Dendritic cell treated with granulocyte-macrophage colony-stimulating factor and Interleukin-4, amounts not matched to agents 40 ng/mL and 50 ng/mL, for 4 days (primary cell): ENCODE measurements at regions of chr16 and their contacts with region 1.

Region 1: GRCh38 chr16:57802341-57803133 is at the start of gene KIFC3:
- H3K4me3 Mint-ChIP-seq: peak within 1 kb of the TSS; percentile 83
- H3K27ac Mint-ChIP-seq: peak within 1 kb of the TSS; percentile 76
- H3K4me1 Mint-ChIP-seq: peaks cover 66% of the 10 kb centered on the region
- H3K27me3 Mint-ChIP-seq: peaks cover 5% of the 10 kb centered on the region

Region 2: DNA sequence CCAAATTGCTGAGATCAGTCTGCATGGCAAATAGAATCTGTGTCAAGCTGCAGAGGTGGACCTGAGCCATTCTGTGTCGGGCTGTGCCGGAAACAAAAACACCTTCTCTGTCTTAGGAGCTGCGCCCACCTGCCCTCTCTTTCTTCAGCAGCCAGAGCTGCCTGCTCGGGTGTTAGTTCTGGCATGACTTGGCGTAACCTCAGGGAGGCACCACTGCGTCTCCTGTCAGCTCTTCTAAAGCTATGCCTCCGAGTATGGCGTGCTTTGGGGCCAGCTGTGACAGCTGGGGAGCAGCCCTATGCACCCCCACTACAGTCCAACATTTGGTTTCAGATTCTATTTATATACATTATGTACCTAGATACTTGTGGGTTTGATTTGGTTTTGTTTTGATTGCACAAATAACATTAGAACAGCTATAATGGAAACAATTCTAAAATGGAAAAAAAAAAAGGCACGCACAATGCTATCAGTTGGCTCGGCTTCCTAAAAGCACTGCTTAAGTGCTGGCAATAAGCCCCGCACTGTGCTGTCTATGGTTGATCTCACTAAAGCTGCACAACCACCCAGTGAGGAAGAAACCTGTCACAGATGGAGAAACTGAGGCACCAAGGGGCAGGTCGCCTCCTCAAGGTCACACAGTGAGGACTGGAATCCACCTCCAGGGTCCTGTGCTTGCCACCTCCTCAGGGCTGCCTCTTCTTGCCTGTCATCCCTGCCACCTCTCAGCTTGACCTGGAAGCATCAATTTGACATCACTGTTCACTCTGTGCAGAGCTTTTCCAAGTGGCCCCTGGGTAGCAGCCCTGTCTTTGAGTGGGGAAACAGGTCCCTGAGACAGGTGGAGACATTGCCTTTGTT is 192.8 kb before region 1 on chr16:
- intact Hi-C with region 1: no loop called
- H3K4me3 Mint-ChIP-seq: no peak overlapping the region
- H3K27ac Mint-ChIP-seq: no peak overlapping the region
- H3K4me1 Mint-ChIP-seq: no peaks in the 10 kb centered on the region
- H3K27me3 Mint-ChIP-seq: peaks cover 31% of the 10 kb centered on the region

Region 3: DNA sequence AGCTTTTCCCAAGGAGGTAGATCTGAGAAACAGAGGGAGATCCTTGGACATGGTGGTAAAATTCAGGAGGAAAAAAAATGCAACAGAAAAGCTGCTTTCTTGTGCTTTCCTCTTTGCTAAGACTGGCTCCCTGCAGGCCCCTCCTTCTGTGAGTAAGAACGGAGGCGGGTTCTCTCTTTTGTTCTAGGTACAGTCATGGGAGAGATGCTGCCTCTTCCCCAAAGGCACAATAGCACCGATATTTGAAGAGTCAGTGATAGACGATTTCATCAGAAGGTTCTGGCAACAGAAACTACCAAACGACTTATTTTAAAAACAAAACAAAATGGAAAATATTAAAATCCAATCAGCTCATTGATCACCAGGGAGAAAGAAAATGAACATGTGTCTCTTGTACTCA is 32.4 kb after region 1 on chr16:
- intact Hi-C with region 1: no loop called
- H3K4me3 Mint-ChIP-seq: no peak overlapping the region
- H3K27ac Mint-ChIP-seq: no peak overlapping the region
- H3K4me1 Mint-ChIP-seq: no peaks in the 10 kb centered on the region
- H3K27me3 Mint-ChIP-seq: peaks cover 13% of the 10 kb centered on the region

Region 4: DNA sequence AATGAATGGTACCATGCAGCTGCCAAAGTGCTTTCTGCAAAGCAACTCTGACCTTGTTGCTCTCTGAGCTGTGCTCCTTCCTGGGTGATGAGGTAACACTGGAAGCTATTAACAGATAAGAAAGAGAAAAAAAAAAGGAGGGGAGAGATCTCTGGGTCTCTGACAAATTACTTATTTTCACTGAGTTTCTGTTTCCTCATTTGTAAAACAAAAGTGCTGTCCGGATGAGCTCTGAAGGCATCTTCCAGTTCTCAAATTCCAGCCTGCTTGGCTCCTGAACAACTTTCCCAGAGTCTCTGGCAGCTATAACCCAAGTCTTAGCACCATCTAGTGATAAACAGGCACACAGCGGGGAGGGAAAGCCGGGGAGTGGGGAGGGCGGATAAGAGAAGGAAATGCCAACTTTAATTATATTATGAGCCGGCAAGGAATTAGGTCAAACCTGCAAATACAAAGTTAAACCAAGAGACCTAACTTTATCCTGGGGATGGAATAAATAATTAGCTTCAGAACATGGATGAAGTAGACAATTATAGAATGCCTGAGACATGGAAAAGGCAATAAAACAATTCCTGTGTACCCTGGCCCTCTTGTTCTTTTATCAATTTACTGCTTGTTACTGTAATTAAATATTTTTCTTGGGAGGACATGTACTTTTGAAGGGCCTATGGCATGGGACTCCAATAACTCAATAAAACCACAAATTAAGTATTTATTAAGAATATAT is 61.1 kb after region 1 on chr16:
- intact Hi-C with region 1: loop called (anchors 10 kb)
- H3K4me3 Mint-ChIP-seq: no peak overlapping the region
- H3K27ac Mint-ChIP-seq: peak overlapping the region; percentile 38
- H3K4me1 Mint-ChIP-seq: peaks cover 9% of the 10 kb centered on the region
- H3K27me3 Mint-ChIP-seq: peaks cover 7% of the 10 kb centered on the region

Region 5: DNA sequence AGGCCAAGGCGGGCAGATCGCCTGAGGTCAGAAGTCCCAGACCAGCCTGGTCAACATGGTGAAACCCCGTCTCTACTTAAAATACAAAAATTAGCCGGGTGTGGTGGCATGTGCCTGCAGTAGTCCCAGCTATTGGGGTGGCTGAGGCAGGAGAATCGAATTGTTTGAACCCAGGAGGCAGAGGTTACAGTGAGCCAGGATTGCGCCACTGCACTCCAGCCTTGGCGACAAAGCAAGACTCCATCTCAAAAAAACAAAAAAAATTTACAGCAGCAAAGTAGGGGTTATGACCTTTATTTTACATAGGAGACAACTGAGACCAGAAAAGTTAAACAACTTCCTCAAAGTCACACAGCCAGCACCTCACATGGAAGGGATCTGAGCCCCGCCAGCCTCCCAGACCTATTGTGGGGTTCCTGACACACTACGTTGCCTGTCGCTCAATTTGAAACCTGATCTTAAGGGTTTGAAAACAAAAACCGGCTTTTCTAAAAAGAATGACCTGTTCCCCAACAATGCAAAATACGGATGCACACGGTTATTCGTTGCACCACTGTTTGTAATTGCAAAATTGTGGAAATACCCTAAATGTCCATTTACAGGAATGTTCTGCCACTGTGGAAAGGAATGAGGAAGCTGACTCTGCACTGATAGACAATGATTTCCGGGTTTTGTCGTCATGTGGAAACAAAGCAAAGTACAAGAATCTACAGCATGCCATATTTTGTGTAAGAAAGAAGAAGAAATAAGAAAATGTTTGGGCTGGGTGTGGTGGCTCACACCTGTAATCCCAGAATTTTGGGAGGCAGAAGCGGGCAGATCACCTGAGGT is 91.2 kb after region 1 on chr16:
- intact Hi-C with region 1: loop called (anchors 5 kb)
- H3K4me3 Mint-ChIP-seq: peak overlapping the region; percentile 75
- H3K27ac Mint-ChIP-seq: peak overlapping the region; percentile 92
- H3K4me1 Mint-ChIP-seq: peaks cover 79% of the 10 kb centered on the region
- H3K27me3 Mint-ChIP-seq: no peaks in the 10 kb centered on the region

Region 6: GRCh38 chr16:58000706-58001676 is 198.5 kb after region 1 on chr16 and contains the start of gene USB1:
- intact Hi-C with region 1: loop called (anchors 5 kb)
- H3K4me3 Mint-ChIP-seq: peak within 1 kb of the TSS; percentile 97
- H3K27ac Mint-ChIP-seq: peak within 1 kb of the TSS; percentile 94
- H3K4me1 Mint-ChIP-seq: peaks cover 68% of the 10 kb centered on the region
- H3K27me3 Mint-ChIP-seq: no peaks in the 10 kb centered on the region

Region 7: GRCh38 chr16:58129097-58129936 is 326.8 kb after region 1 on chr16 and contains the start of gene CFAP20:
- intact Hi-C with region 1: loop called (anchors 5 kb)
- H3K4me3 Mint-ChIP-seq: peak within 1 kb of the TSS; percentile 71
- H3K27ac Mint-ChIP-seq: peak within 1 kb of the TSS; percentile 84
- H3K4me1 Mint-ChIP-seq: peaks cover 21% of the 10 kb centered on the region
- H3K27me3 Mint-ChIP-seq: no peaks in the 10 kb centered on the region